ENCODE measurements at regions of chr19 and their contacts with region 1.

Region 1: GRCh38 chr19:4089400-4089908 is 22.8 kb upstream of the ZBTB7A start:
- DNase-seq: peak; percentile 70 to 89 (median 77)
- H3K4me3 ChIP-seq: peak overlapping the region; percentile 41 to 87 (median 65)
- H3K4me3 Mint-ChIP-seq: peak overlapping the region; percentile 82 to 92
- H3K27ac ChIP-seq: peak overlapping the region; percentile 89 to 97
- H3K27ac Mint-ChIP-seq: peak overlapping the region; percentile 91 to 96 (median 95)
- H3K4me1 ChIP-seq: peaks cover 22 to 30% of the 10 kb centered on the region in 2 donors
- H3K4me1 Mint-ChIP-seq: peaks cover 24% of the 10 kb centered on the region
- H3K27me3 ChIP-seq: no peaks in the 10 kb centered on the region
- H3K27me3 Mint-ChIP-seq: peaks cover 0 to 5% (median 0%) of the 10 kb centered on the region in 3 donors
- CTCF ChIP-seq: no peak

Region 2: GRCh38 chr19:3914199-3914598 is 175.3 kb before region 1 on chr19:
- intact Hi-C with region 1: no loop called
- DNase-seq: no peak
- H3K4me3 ChIP-seq: no peak overlapping the region
- H3K4me3 Mint-ChIP-seq: no peak overlapping the region
- H3K27ac ChIP-seq: no peak overlapping the region
- H3K27ac Mint-ChIP-seq: peak overlapping the region in 1 of 7 donors; percentile 41
- H3K4me1 ChIP-seq: no peaks in the 10 kb centered on the region
- H3K4me1 Mint-ChIP-seq: no peaks in the 10 kb centered on the region
- H3K27me3 ChIP-seq: no peaks in the 10 kb centered on the region
- H3K27me3 Mint-ChIP-seq: peaks cover 0 to 2% (median 1%) of the 10 kb centered on the region in 3 donors
- CTCF ChIP-seq: no peak

Region 3: DNA sequence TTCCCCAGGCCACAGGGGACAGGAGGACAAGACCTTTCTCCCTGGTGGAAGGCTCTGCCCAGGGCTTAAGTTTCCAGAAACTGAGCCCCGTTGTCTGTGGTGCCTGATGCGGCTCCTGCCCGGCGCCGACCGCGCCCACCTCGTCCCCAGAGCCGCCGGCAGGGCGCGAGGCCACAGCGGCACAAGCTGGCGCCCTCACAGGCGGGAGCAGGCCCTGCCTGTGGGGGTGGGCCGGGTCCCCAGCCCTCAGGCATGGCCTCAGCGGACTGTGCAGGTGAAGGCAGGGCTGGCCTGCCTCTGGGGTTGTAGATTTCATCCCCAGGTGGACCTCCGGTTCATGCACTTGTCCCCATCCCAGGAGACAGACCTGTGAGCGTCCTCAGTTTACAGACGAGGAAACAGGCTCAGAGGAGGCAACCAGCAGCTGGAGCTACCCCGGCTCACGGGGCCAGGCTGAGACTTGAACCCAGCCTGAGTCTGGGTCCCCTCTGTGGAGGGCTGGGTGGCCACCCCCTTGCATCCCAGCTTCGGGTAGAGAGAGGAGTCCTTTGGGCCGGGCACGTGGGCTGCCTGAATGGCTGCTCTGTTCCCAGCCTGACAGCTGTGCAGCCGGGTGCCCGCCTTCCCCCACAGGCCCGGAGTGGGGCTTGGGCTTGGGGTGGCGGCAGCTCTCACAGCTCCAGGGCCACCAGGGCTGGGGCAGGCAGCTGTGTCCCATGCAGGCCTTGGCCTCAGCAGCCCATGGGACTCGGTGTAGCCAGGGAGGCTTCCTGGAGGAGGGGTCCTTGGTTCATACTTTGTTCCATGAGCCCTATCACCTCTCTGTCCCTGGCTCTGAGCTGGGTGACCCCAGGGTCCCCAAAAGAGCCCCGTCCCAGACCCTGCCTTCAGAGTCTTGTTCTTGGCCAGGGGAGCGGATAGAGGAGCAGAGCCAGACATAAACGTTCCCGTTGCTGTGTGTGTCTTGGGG is 55.1 kb before region 1 on chr19:
- intact Hi-C with region 1: loop called in 1 of 2 experiments (anchors 5 kb)
- DNase-seq: no peak
- H3K4me3 ChIP-seq: no peak overlapping the region
- H3K4me3 Mint-ChIP-seq: no peak overlapping the region
- H3K27ac ChIP-seq: peak overlapping the region; percentile 16 to 53
- H3K27ac Mint-ChIP-seq: peak overlapping the region in 5 of 7 donors; percentile 60 to 85 (median 81)
- H3K4me1 ChIP-seq: peaks cover 9 to 11% of the 10 kb centered on the region in 2 donors
- H3K4me1 Mint-ChIP-seq: peaks cover 5% of the 10 kb centered on the region
- H3K27me3 ChIP-seq: no peaks in the 10 kb centered on the region
- H3K27me3 Mint-ChIP-seq: peaks cover 0 to 2% (median 0%) of the 10 kb centered on the region in 3 donors
- CTCF ChIP-seq: no peak

Region 4: GRCh38 chr19:4123615-4124568 is 34.4 kb after region 1 on chr19 and contains the start of gene MAP2K2:
- intact Hi-C with region 1: no loop called
- DNase-seq: peak; percentile 91 to 94 (median 93)
- H3K4me3 ChIP-seq: peak within 1 kb of the TSS; percentile 59 to 95 (median 81)
- H3K4me3 Mint-ChIP-seq: peak within 1 kb of the TSS; percentile 89 to 90
- H3K27ac ChIP-seq: peak within 1 kb of the TSS in 1 of 2 donors; percentile 75
- H3K27ac Mint-ChIP-seq: peak within 1 kb of the TSS in 6 of 7 donors; percentile 60 to 94 (median 86)
- H3K4me1 ChIP-seq: peaks cover 17 to 19% of the 10 kb centered on the region in 2 donors
- H3K4me1 Mint-ChIP-seq: peaks cover 17% of the 10 kb centered on the region
- H3K27me3 ChIP-seq: no peaks in the 10 kb centered on the region
- H3K27me3 Mint-ChIP-seq: peaks cover 0 to 3% (median 0%) of the 10 kb centered on the region in 3 donors
- CTCF ChIP-seq: no peak
- polyA plus RNA-seq, gene MAP2K2: 30.5 to 94.5 (median 40.2) TPM

Measured in CD14-positive monocyte (primary cell).